ENCODE measurements at regions of chr4 and their contacts with region 1.

Region 1: GRCh38 chr4:25159884-25160713 is at the start of gene SEPSECS:
- DNase-seq: peak; percentile 97
- ATAC-seq: peak; percentile 95
- total RNA-seq, gene SEPSECS: 5.4 TPM

Region 2: GRCh38 chr4:24570574-24571236 is 589.4 kb before region 1 on chr4:
- intact Hi-C with region 1: loop called (anchors 10 kb)
- DNase-seq: no peak
- ATAC-seq: no peak

Region 3: GRCh38 chr4:24999392-25000089 is 160.6 kb before region 1 on chr4:
- intact Hi-C with region 1: no loop called
- DNase-seq: no peak
- ATAC-seq: no peak

Region 4: GRCh38 chr4:25103418-25103817 is 56.7 kb before region 1 on chr4:
- intact Hi-C with region 1: loop called (anchors 5 kb)
- DNase-seq: no peak
- ATAC-seq: peak; percentile 70

Region 5: DNA sequence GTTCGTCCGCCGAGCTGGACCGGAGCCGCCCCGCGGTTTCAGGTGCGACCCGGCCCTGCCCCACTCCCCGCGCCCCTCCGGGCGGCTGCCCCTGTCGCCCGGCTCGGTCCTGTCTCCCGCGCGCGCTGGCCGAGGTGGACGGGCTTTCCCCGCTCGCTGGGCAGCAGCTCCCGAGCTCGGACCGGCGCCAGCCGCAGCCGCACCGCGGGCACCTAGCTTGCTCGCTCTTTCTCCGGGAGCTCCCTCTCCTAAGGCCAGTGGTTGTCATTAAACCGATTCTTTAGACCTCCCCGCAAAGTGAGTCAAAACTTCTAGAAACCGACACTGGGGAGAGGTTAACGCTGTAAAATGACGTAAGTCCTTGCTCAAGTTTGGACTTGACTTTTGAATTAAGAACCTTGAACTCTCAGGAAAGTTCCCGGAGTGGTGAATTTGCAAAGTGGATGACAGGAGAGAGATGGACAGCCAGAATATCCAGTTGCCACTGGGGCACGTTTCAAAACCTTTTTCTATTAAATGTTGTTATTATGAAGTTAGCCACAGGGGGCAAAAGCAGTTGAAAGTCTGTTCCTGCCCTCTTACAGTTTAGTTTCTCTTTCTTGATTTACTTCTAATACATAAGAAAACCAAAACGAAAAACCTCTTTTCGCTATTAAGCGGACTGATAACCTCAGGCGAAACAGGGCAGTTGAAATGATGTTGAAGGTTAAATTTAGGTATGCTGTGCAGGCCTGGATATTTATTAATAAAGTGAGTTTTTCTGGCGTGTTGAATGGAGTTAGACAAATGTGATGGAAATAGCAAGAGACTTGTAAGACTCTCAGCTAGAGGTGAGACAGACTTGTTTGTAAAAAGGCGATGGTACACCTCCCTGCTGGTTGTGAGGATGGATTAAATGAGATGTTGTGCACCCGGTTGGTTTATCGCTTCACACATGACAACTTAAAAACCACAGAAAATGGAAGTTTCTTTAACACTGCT is 74.6 kb after region 1 on chr4:
- intact Hi-C with region 1: loop called (anchors 5 kb)
- DNase-seq: peak; percentile 62
- ATAC-seq: peak; percentile 73

Region 6: DNA sequence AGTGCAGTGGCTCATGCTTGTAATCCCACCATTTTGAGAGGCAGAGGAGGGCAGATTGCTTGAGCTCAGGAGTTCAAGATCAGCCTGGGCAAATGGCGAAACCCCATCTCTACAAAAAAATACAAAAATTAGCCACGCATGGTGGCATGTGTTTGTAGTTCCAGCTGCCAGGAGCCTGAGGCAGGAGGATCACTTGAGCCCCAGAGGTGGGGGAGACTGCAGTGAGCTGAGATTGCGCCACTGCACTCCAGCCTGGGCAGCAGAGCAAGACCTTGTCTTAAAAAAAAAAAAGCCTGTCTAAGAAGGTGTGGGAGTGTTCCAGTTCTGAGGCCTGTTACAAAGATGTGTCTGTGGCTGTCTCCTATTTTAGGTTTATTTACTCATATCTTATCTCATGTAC is 111.8 kb after region 1 on chr4:
- intact Hi-C with region 1: no loop called
- DNase-seq: no peak
- ATAC-seq: no peak

Region 7: GRCh38 chr4:25312496-25313200 is 152.5 kb after region 1 on chr4 and contains the start of gene ZCCHC4:
- intact Hi-C with region 1: loop called (anchors 2 kb)
- DNase-seq: peak; percentile 94
- ATAC-seq: peak; percentile 98
- total RNA-seq, gene ZCCHC4: 9.3 TPM